ENCODE measurements at regions of chr1 and their contacts with region 1.

Region 1: GRCh38 chr1:34742667-34743270 is 12.1 kb upstream of the GJB5 start:
- DNase-seq: peak; percentile 47
- ATAC-seq: peak; percentile 97
- H3K4me3 ChIP-seq: no peak overlapping the region
- H3K27ac ChIP-seq: no peak overlapping the region
- H3K4me1 ChIP-seq: no peaks in the 10 kb centered on the region
- H3K27me3 ChIP-seq: no peaks in the 10 kb centered on the region
- CTCF ChIP-seq: peak; percentile 97

Region 2: GRCh38 chr1:33633019-33633801 is 1109.6 kb before region 1 on chr1:
- CTCF ChIA-PET with region 1: interaction called, 21 read pairs
- POLR2A ChIA-PET with region 1: no interaction called
- in situ Hi-C with region 1: no loop called
- intact Hi-C with region 1: loop called (anchors 5 kb)
- DNase-seq: peak; percentile 77
- ATAC-seq: peak; percentile 96
- H3K4me3 ChIP-seq: peak overlapping the region in 1 of 2 experiments; percentile 23; a peak in 1 of 4 replicates
- H3K27ac ChIP-seq: no peak overlapping the region
- H3K4me1 ChIP-seq: no peaks in the 10 kb centered on the region
- H3K27me3 ChIP-seq: peaks cover 12% of the 10 kb centered on the region
- CTCF ChIP-seq: peak; percentile 99

Region 3: GRCh38 chr1:33735621-33736020 is 1007.1 kb before region 1 on chr1:
- CTCF ChIA-PET with region 1: no interaction called
- POLR2A ChIA-PET with region 1: no interaction called
- in situ Hi-C with region 1: no loop called
- intact Hi-C with region 1: loop called (anchors 10 kb)
- DNase-seq: no peak
- ATAC-seq: no peak
- H3K4me3 ChIP-seq: no peak overlapping the region
- H3K27ac ChIP-seq: no peak overlapping the region
- H3K4me1 ChIP-seq: no peaks in the 10 kb centered on the region
- H3K27me3 ChIP-seq: peaks cover 26% of the 10 kb centered on the region
- CTCF ChIP-seq: peak; percentile 43

Region 4: DNA sequence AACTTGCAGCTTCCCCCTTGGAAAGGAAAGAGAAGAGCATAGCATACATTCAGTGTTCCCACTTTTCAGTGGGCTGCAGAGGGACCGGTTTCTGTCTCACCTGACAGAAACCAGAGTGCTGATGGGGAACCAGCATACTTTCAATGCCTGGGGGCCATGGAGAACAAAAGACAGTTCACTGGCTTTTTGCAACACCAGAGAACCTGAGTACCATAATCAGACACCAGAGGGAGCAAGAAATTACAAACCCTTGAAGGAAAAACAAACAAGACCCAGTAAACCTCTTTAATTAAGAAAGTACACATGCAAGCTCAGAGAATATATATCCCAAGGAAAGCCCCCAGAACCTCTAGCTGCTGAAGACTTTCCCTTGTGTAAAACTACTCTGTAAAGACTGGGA is 628.9 kb before region 1 on chr1:
- CTCF ChIA-PET with region 1: interaction called, 8 read pairs
- POLR2A ChIA-PET with region 1: no interaction called
- in situ Hi-C with region 1: no loop called
- intact Hi-C with region 1: loop called (anchors 10 kb)
- DNase-seq: peak; percentile 8
- ATAC-seq: no peak
- H3K4me3 ChIP-seq: no peak overlapping the region
- H3K27ac ChIP-seq: no peak overlapping the region
- H3K4me1 ChIP-seq: no peaks in the 10 kb centered on the region
- H3K27me3 ChIP-seq: no peaks in the 10 kb centered on the region
- CTCF ChIP-seq: peak; percentile 49; the same call in 1 of the 2 replicates

Region 5: GRCh38 chr1:34460193-34460592 is 282.6 kb before region 1 on chr1:
- CTCF ChIA-PET with region 1: interaction called, 3 read pairs
- POLR2A ChIA-PET with region 1: no interaction called
- in situ Hi-C with region 1: no loop called
- intact Hi-C with region 1: loop called (anchors 10 kb)
- DNase-seq: peak; percentile 10
- ATAC-seq: peak; percentile 62; the same call in 1 of the 2 replicates
- H3K4me3 ChIP-seq: no peak overlapping the region
- H3K27ac ChIP-seq: no peak overlapping the region
- H3K4me1 ChIP-seq: no peaks in the 10 kb centered on the region
- H3K27me3 ChIP-seq: no peaks in the 10 kb centered on the region
- CTCF ChIP-seq: peak; percentile 77

Region 6: DNA sequence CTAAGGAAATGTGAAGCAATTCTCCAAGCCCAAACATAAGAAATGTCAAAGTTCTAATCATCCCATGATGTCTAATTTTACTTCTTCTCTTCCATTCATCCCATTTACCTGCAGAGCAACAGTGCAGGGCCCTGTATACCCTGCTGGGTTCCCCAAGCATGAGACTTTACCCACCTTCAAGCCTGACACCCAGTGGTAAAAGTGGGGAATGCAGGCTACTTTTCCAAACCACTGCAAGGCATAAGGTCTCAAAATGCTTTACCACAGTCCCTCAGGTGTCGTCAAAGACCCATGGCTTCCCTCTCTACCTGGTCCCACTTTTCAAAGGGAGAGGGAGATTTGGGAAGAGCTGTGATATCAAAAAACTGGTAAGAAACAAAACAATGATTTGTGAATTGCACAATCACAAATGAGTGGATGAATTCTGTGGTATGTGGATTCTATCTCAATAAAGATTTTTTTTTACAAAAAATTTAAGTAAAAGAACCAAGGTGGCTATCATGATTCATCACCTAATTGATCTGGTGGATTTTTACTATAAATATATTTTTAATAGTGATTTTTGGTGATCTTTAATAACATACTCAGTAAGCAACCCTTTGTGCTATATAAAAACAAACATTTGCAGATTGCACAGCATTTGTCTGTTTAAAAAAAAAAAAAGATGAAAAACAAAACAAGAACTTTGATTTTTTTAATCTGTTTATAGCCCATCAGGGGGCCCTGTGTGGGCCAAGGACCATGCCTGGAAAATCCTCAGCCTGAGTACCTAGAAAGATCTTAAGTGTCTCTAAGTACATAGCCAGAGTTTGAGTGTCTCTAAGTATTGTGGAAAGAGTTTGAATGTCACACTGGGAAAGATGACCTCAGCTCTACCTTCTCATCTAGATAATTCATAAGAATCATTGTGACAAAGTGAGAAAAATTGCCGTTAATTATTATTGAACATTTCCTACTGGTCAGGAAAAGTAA is 61.0 kb before region 1 on chr1:
- CTCF ChIA-PET with region 1: no interaction called
- POLR2A ChIA-PET with region 1: no interaction called
- in situ Hi-C with region 1: no loop called
- intact Hi-C with region 1: loop called (anchors 2 kb)
- DNase-seq: peak; percentile 57
- ATAC-seq: peak; percentile 89
- H3K4me3 ChIP-seq: no peak overlapping the region
- H3K27ac ChIP-seq: no peak overlapping the region
- H3K4me1 ChIP-seq: no peaks in the 10 kb centered on the region
- H3K27me3 ChIP-seq: peaks cover 7% of the 10 kb centered on the region
- CTCF ChIP-seq: peak; percentile 87